ENCODE measurements at regions of chr17 and their contacts with region 1.

Region 1: GRCh38 chr17:21252796-21253645 is at the start of gene NATD1:
- DNase-seq: peak; percentile 74
- H3K4me3 Mint-ChIP-seq: peak within 1 kb of the TSS; percentile 70
- H3K27ac Mint-ChIP-seq: no peak within 1 kb of the TSS
- H3K4me1 Mint-ChIP-seq: peaks cover 17% of the 10 kb centered on the region
- H3K27me3 Mint-ChIP-seq: no peaks in the 10 kb centered on the region
- CTCF ChIP-seq: no peak
- total RNA-seq, gene NATD1: 2.3 and 2.5 TPM in 2 replicates

Region 2: GRCh38 chr17:21186399-21187187 is 66.4 kb before region 1 on chr17:
- CTCF ChIA-PET with region 1: no interaction called
- POLR2A ChIA-PET with region 1: no interaction called
- intact Hi-C with region 1: no loop called
- DNase-seq: no peak
- H3K4me3 Mint-ChIP-seq: no peak overlapping the region
- H3K27ac Mint-ChIP-seq: no peak overlapping the region
- H3K4me1 Mint-ChIP-seq: no peaks in the 10 kb centered on the region
- H3K27me3 Mint-ChIP-seq: no peaks in the 10 kb centered on the region
- CTCF ChIP-seq: no peak

Region 3: GRCh38 chr17:21214015-21214776 is 38.8 kb before region 1 on chr17 and contains the start of gene TMEM11:
- CTCF ChIA-PET with region 1: interaction called, 3 read pairs
- POLR2A ChIA-PET with region 1: interaction called, 12 read pairs
- intact Hi-C with region 1: no loop called
- DNase-seq: peak; percentile 94
- H3K4me3 Mint-ChIP-seq: peak within 1 kb of the TSS; percentile 88
- H3K27ac Mint-ChIP-seq: peak within 1 kb of the TSS; percentile 96
- H3K4me1 Mint-ChIP-seq: peaks cover 39% of the 10 kb centered on the region
- H3K27me3 Mint-ChIP-seq: no peaks in the 10 kb centered on the region
- CTCF ChIP-seq: peak; percentile 6
- total RNA-seq, gene TMEM11: 27.8 and 33.5 TPM in 2 replicates

Region 4: DNA sequence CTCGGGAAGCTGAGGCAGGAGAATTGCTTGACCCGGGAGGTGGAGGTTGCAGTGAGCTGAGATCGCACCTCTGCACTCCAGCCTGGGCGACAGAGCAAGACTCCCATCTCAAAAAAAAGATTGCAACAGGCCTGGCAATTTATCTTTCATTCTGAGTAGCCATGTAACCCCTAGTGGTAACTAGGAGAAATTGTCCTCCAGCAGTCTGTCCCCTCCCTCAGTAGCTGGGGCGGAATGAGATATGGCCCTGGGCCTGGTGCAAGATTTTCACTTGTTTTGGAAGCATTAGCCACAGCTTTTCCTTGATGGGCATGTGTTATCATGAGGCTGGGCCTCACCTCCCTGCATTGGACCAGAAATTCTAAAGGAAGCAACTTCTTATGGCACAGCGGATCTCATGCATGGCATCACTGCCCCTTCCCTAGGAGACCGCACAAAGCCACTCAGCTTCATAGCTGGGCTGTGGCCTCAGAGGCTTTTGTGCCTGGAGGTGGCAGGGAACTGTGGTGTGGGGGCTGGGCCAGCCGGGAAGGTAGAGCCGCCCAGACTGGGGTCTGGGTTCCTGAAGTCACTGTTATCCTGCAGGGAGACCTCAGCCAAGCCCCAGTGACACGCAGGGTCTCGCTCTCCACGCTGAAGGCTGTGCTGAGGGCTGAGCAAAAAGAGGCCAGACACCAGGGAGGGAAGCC is 13.2 kb before region 1 on chr17:
- CTCF ChIA-PET with region 1: interaction called, 15 read pairs
- POLR2A ChIA-PET with region 1: interaction called, 4 read pairs
- intact Hi-C with region 1: no loop called
- DNase-seq: peak; percentile 41
- H3K4me3 Mint-ChIP-seq: no peak overlapping the region
- H3K27ac Mint-ChIP-seq: no peak overlapping the region
- H3K4me1 Mint-ChIP-seq: no peaks in the 10 kb centered on the region
- H3K27me3 Mint-ChIP-seq: peaks cover 16% of the 10 kb centered on the region
- CTCF ChIP-seq: peak; percentile 32